A549 (cell line): ENCODE measurements at regions of chr9 and their contacts with region 1.

Region 1: GRCh38 chr9:121634329-121635261 is 16.8 kb upstream of the DAB2IP start:
- DNase-seq: peak; percentile 46 to 58
- ATAC-seq: peak; percentile 85 to 93
- H3K4me3 ChIP-seq: no peak overlapping the region
- H3K27ac ChIP-seq: peak overlapping the region in 1 of 2 experiments; percentile 37; a peak in 1 of 6 replicates
- H3K4me1 ChIP-seq: peaks cover 23% of the 10 kb centered on the region
- CTCF ChIP-seq: peak; percentile 72
- EP300 ChIP-seq: no peak
- POLR2A ChIP-seq: no peak
- RAD21 ChIP-seq: peak; percentile 81 to 84

Region 2: GRCh38 chr9:121026260-121026691 is 608.3 kb before region 1 on chr9:
- CTCF ChIA-PET with region 1: no interaction called
- POLR2A ChIA-PET with region 1: no interaction called
- DNase-seq: peak in 1 of 2 experiments; percentile 91
- ATAC-seq: peak; percentile 89 to 96
- H3K4me3 ChIP-seq: peak overlapping the region; percentile 1; the same call in 1 of the 3 replicates
- H3K27ac ChIP-seq: peak overlapping the region; percentile 69 to 77
- H3K4me1 ChIP-seq: peaks cover 41% of the 10 kb centered on the region
- CTCF ChIP-seq: no peak
- EP300 ChIP-seq: peak; percentile 58 to 83; a peak in 3 of 5 replicates
- POLR2A ChIP-seq: no peak
- RAD21 ChIP-seq: peak; percentile 13 to 30; a peak in 1 of 5 replicates

Region 3: GRCh38 chr9:121621113-121621449 is 13.5 kb before region 1 on chr9:
- CTCF ChIA-PET with region 1: interaction called, 22 read pairs
- POLR2A ChIA-PET with region 1: no interaction called
- DNase-seq: peak; percentile 56 to 67
- ATAC-seq: peak; percentile 79 to 93
- H3K4me3 ChIP-seq: no peak overlapping the region
- H3K27ac ChIP-seq: no peak overlapping the region
- H3K4me1 ChIP-seq: peaks cover 9% of the 10 kb centered on the region; the same call in 2 of the 3 replicates
- CTCF ChIP-seq: peak; percentile 47
- EP300 ChIP-seq: no peak
- POLR2A ChIP-seq: no peak
- RAD21 ChIP-seq: peak; percentile 53 to 60

Region 4: DNA sequence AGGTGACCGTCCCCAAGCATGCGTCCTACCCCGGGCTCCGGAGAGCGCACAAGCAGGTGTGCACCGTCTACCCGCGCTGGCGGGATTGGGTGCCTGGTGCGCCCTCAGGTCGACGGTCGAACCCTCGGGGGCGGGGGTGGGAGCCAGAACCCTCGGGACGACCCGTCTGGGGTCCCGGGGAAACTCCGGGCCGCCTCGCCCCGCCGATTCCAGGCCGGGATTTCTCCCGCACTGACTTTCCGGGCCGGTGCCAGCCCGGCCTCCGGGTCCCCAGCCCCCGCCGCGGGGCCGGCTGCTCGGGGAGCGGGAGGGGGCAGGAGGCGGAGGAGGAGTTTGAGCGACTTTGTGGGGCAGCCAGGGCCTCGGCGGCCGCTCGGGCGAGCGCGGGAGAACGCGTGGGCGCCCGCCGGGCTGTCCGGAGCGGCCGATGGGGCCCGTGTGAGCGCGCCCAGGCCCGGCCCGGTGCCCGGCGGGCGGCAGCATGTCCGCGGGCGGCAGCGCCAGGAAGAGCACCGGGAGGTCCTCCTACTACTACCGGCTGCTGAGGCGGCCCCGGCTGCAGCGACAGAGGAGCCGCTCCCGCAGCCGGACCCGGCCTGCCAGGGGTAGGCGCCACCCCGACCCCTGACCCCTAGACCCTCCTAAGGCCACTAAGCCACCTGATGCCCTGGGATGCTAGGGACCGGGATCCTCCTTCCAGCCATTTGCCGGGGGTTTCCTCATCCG is 16.9 kb after region 1 on chr9 and contains the start of gene DAB2IP:
- CTCF ChIA-PET with region 1: interaction called, 16 read pairs
- POLR2A ChIA-PET with region 1: no interaction called
- DNase-seq: no peak
- ATAC-seq: peak; percentile 60 to 71
- H3K4me3 ChIP-seq: peak within 1 kb of the TSS; percentile 88
- H3K27ac ChIP-seq: peak within 1 kb of the TSS; percentile 89 to 98
- H3K4me1 ChIP-seq: peaks cover 45% of the 10 kb centered on the region
- CTCF ChIP-seq: no peak
- EP300 ChIP-seq: no peak
- POLR2A ChIP-seq: peak; percentile 27; the same call in 1 of the 2 replicates
- RAD21 ChIP-seq: no peak
- polyA plus RNA-seq, gene DAB2IP: 9.4 and 9.7 TPM in 2 replicates

Region 5: GRCh38 chr9:121686930-121687541 is 52.4 kb after region 1 on chr9:
- CTCF ChIA-PET with region 1: interaction called, 74 read pairs
- POLR2A ChIA-PET with region 1: no interaction called
- DNase-seq: peak; percentile 71 to 79
- ATAC-seq: peak; percentile 84 to 92
- H3K4me3 ChIP-seq: no peak overlapping the region
- H3K27ac ChIP-seq: no peak overlapping the region
- H3K4me1 ChIP-seq: no peaks in the 10 kb centered on the region
- CTCF ChIP-seq: peak; percentile 84
- EP300 ChIP-seq: no peak
- POLR2A ChIP-seq: no peak
- RAD21 ChIP-seq: peak; percentile 85 to 88

Region 6: DNA sequence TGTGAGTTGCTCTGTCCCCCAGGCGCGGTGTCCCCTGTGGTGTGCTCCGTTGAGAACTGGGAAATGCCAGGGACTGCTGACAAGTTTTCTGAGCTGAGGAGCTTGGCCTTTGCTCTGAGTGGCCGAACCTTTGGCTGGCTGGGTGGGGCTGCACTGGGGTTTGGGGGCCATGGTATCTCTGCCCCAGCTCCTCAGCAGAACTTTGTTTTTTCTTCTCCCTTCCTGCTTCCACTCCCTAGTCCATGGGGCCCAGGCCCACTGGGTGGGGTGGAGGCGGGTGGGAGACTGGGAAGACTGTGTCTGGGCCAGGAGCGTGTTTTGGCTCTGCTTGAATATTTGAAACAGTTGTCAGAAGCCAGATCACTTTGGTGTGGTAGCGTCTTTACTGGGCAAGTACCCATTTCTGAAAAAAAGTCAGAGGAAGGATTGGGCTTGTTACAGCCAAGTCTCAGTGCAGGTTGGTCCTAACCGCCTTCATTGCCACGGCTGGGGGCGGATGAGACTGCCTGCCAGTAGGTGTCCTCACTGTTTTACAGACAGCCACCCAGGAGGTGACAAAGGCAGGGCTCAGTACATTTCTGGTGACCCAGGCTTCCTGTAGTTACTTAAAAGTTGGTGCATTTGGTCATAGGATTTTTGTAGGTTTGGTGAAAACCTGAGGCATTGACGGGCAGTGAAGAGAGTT is 109.5 kb after region 1 on chr9:
- CTCF ChIA-PET with region 1: interaction called, 10 read pairs
- POLR2A ChIA-PET with region 1: no interaction called
- DNase-seq: peak; percentile 62 to 90
- ATAC-seq: peak; percentile 75 to 81
- H3K4me3 ChIP-seq: peak overlapping the region; percentile 55
- H3K27ac ChIP-seq: peak overlapping the region; percentile 72 to 85
- H3K4me1 ChIP-seq: peaks cover 27% of the 10 kb centered on the region
- CTCF ChIP-seq: peak; percentile 71
- EP300 ChIP-seq: no peak
- POLR2A ChIP-seq: no peak
- RAD21 ChIP-seq: peak; percentile 74 to 81

Region 7: GRCh38 chr9:121997791-121998190 is 363.2 kb after region 1 on chr9:
- CTCF ChIA-PET with region 1: interaction called, 34 read pairs
- POLR2A ChIA-PET with region 1: no interaction called
- DNase-seq: no peak
- ATAC-seq: no peak
- H3K4me3 ChIP-seq: no peak overlapping the region
- H3K27ac ChIP-seq: no peak overlapping the region
- H3K4me1 ChIP-seq: peaks cover 15% of the 10 kb centered on the region
- CTCF ChIP-seq: no peak
- EP300 ChIP-seq: no peak
- POLR2A ChIP-seq: no peak
- RAD21 ChIP-seq: no peak